ENCODE measurements at regions of chr1 and their contacts with region 1.

Region 1: DNA sequence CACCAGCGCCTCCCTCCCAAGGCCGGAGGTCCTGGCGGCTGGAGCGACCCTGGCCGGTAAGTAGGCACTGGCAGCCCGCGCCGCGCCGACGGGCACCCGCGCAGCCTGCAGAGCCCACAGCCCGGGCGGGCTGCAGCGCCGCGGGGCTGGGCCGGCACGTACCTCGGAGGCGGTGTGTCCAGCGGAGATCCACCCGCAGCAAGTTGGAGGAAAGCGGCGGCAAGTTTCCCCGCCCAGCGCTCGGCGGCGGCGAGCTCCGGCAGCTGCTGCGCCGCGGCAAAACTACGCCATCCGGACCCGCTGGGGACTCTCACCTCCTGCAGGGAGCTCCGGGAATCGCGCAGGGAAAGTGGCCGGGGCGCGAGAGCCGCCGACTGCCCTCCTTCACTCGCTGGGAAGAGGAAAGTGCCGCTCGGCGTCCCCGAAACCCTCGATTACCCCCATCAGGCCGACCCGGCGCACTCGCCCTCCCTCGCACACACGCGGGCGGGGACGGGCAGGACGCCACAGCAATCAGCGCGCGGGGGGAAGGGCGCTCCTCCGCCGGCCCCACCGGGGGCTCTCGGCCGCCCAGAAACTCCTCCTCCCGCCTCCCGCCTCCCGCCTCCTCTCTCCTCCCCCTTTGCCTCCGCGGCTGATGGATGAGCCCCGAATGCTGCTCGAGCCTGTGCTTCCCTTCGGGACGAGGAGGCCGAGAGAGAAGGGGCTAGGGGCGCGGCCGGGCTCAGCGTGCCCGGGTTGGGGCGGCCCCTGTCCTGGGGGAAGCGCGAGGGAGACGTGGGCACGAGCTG is at the start of gene TGFBR3:
- DNase-seq: peak; percentile 86
- H3K4me3 Mint-ChIP-seq: peak within 1 kb of the TSS; percentile 99
- H3K27ac Mint-ChIP-seq: peak within 1 kb of the TSS; percentile 92
- H3K4me1 Mint-ChIP-seq: peaks cover 26% of the 10 kb centered on the region
- H3K27me3 Mint-ChIP-seq: no peaks in the 10 kb centered on the region
- CTCF ChIP-seq: peak; percentile 51
- total RNA-seq, gene TGFBR3: 7.0 and 12.0 TPM in 2 replicates

Region 2: GRCh38 chr1:91529856-91530255 is 356.1 kb before region 1 on chr1:
- CTCF ChIA-PET with region 1: interaction called, 35 read pairs
- POLR2A ChIA-PET with region 1: interaction called, 18 read pairs
- intact Hi-C with region 1: loop called (anchors 1 kb)
- DNase-seq: peak; percentile 67
- H3K4me3 Mint-ChIP-seq: no peak overlapping the region
- H3K27ac Mint-ChIP-seq: peak overlapping the region; percentile 70
- H3K4me1 Mint-ChIP-seq: peaks cover 14% of the 10 kb centered on the region
- H3K27me3 Mint-ChIP-seq: no peaks in the 10 kb centered on the region
- CTCF ChIP-seq: peak; percentile 60

Region 3: DNA sequence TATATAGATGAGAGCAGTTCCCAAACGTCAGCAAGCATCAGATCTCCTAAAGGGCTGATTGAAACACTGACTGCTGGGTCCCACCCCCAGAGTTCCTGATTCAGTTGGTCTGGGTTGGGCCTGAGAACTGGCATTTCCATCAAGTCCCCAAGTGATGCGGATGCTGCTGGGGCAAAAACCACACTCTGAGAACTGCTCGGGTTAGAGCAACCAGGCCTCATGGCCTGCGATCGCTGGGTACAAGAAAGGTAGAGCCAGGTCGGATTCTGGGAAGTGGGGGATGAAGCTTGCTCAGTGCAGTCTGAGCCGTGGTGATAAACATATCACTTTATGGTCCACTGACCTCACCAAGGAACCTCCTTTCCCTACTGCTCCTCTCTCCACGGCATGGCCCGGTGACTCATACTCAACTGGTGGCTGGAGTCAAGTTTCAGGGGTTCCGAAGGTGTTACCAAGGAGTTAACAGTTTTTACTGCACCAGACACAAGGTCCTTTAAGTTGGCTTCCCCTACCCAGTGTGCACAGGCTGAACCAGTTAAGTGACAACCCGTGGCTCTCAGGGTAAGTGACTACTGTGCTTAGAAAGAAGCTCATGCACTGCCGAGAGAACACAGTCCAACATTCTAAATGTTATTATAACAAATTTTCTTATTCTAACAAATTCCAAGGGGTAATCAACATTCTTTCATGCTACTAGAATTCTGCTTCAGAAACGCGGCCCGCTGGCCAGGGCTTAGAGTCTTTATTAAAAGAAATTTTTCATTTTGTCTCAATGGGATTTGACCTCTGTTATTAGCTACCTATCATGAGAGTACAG is 153.4 kb before region 1 on chr1:
- CTCF ChIA-PET with region 1: interaction called, 17 read pairs
- POLR2A ChIA-PET with region 1: interaction called, 35 read pairs
- intact Hi-C with region 1: loop called (anchors 1 kb)
- DNase-seq: peak; percentile 85
- H3K4me3 Mint-ChIP-seq: peak overlapping the region; percentile 47
- H3K27ac Mint-ChIP-seq: peak overlapping the region; percentile 79
- H3K4me1 Mint-ChIP-seq: peaks cover 55% of the 10 kb centered on the region
- H3K27me3 Mint-ChIP-seq: no peaks in the 10 kb centered on the region
- CTCF ChIP-seq: no peak

Region 4: GRCh38 chr1:91803847-91804545 is 81.9 kb before region 1 on chr1:
- CTCF ChIA-PET with region 1: interaction called, 6 read pairs
- POLR2A ChIA-PET with region 1: interaction called, 24 read pairs
- intact Hi-C with region 1: loop called (anchors 5 kb)
- DNase-seq: peak; percentile 78
- H3K4me3 Mint-ChIP-seq: peak overlapping the region; percentile 54
- H3K27ac Mint-ChIP-seq: peak overlapping the region; percentile 88
- H3K4me1 Mint-ChIP-seq: peaks cover 73% of the 10 kb centered on the region
- H3K27me3 Mint-ChIP-seq: no peaks in the 10 kb centered on the region
- CTCF ChIP-seq: no peak

Region 5: GRCh38 chr1:91864017-91864700 is 21.8 kb before region 1 on chr1:
- CTCF ChIA-PET with region 1: interaction called, 17 read pairs
- POLR2A ChIA-PET with region 1: interaction called, 32 read pairs
- intact Hi-C with region 1: no loop called
- DNase-seq: peak; percentile 90
- H3K4me3 Mint-ChIP-seq: peak overlapping the region; percentile 48
- H3K27ac Mint-ChIP-seq: peak overlapping the region; percentile 32
- H3K4me1 Mint-ChIP-seq: peaks cover 13% of the 10 kb centered on the region
- H3K27me3 Mint-ChIP-seq: no peaks in the 10 kb centered on the region
- CTCF ChIP-seq: no peak

Region 6: GRCh38 chr1:91958964-91959363 is 73.1 kb after region 1 on chr1:
- CTCF ChIA-PET with region 1: no interaction called
- POLR2A ChIA-PET with region 1: no interaction called
- intact Hi-C with region 1: no loop called
- DNase-seq: no peak
- H3K4me3 Mint-ChIP-seq: no peak overlapping the region
- H3K27ac Mint-ChIP-seq: no peak overlapping the region
- H3K4me1 Mint-ChIP-seq: no peaks in the 10 kb centered on the region
- H3K27me3 Mint-ChIP-seq: no peaks in the 10 kb centered on the region
- CTCF ChIP-seq: no peak